ENCODE measurements at regions of chr2 and their contacts with region 1.

Region 1: GRCh38 chr2:170409164-170409535 is 231.2 kb downstream of the MYO3B start:
- H3K4me3 ChIP-seq: peak overlapping the region; percentile 11; the same call in 1 of the 2 replicates
- H3K27ac ChIP-seq: no peak overlapping the region
- H3K4me1 ChIP-seq: no peaks in the 10 kb centered on the region
- CTCF ChIP-seq: peak; percentile 57

Region 2: DNA sequence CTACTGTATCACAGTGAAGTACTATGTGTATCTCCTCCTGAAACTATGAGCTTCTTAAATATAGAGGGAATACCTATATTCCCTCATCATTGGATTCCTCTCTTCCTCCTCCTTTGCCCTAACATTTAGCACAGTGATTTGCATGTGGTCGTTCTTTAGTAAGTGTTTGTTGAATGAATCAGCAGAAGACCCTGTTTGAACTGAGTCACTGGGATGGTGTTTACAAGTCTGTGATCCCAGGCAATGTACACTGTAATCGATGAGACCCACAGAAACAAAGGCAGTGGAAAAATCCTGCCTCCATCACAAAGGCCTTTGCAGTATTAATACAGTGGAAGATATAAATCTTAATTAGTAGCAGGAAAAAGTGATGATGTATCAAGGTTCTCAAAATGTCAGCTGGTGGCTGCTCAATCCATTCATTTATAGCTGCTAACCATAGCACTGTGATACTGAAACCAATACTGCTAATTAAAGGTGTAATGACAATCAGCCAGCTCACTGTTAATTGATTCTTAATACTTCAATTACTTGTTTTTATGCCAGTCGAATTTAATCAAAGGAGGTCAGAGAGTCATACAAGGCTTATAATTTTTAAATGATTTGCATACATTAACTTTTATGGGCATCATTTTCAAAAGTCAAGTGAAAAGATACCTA is 252.0 kb before region 1 on chr2:
- CTCF ChIA-PET with region 1: no interaction called
- POLR2A ChIA-PET with region 1: no interaction called
- H3K4me3 ChIP-seq: no peak overlapping the region
- H3K27ac ChIP-seq: no peak overlapping the region
- H3K4me1 ChIP-seq: no peaks in the 10 kb centered on the region
- CTCF ChIP-seq: no peak

Region 3: DNA sequence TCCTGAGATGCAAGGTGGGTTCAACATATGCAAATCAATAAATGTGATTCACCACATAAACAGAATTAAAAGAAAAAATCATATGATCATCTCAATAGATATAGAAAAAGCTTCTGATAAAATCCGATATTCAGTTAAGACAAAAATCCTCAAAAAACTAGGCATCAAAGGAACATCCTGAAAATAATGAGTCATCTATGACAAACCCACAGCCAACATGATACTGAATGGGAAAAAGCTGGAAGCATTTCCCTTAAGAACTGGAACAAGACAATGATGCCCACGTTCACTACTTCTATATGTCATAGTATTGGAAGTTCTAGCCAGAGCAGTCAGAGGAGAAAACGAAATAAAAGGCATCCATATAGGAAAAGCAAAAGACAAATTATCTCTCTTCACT is 150.8 kb before region 1 on chr2:
- CTCF ChIA-PET with region 1: no interaction called
- POLR2A ChIA-PET with region 1: no interaction called
- H3K4me3 ChIP-seq: no peak overlapping the region
- H3K27ac ChIP-seq: no peak overlapping the region
- H3K4me1 ChIP-seq: no peaks in the 10 kb centered on the region
- CTCF ChIP-seq: no peak

Region 4: DNA sequence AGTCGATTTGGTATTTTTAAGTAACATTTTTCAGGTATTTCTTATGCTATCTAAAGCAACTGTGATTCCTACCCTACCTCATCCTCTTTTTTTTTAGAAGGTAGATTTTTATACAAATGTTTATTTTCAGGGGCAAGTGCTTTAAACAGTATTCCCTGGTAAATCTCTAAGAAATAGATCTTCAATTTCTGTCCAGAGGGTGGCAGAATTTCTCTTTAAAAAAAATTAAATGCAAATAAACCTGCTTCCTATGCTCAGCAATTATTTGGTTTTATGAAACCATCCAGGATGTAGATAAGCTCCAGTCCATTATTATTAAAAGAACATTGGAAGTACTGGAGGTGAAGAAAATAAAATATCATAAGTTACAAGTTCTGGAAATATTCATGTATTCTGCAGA is 39.3 kb before region 1 on chr2:
- CTCF ChIA-PET with region 1: interaction called, 16 read pairs
- POLR2A ChIA-PET with region 1: no interaction called
- H3K4me3 ChIP-seq: no peak overlapping the region
- H3K27ac ChIP-seq: no peak overlapping the region
- H3K4me1 ChIP-seq: no peaks in the 10 kb centered on the region
- CTCF ChIP-seq: 0 out of 2 replicates have a peak, but pooled peaks have one; percentile 7

Region 5: GRCh38 chr2:170425281-170425751 is 16.2 kb after region 1 on chr2:
- CTCF ChIA-PET with region 1: interaction called, 37 read pairs
- POLR2A ChIA-PET with region 1: no interaction called
- H3K4me3 ChIP-seq: no peak overlapping the region
- H3K27ac ChIP-seq: no peak overlapping the region
- H3K4me1 ChIP-seq: no peaks in the 10 kb centered on the region
- CTCF ChIP-seq: no peak

Region 6: DNA sequence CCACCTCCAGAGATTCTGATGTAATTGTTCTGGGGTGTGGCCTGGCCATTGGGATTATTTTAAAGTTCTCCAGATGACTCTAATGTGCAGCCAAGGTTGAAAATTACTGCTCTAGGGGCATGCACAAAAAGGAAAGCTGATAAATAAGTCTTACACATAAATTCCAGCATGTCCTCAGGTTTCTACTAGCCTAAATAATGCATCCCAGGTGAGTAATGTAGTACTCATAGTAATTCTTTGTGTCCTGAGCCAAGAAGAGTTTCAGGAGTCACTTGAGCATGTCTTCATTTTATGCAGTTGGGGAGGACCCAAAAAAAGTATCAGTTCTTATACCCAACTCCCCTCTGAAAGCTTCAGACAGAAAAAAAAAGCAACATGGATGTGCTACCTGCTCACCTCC is 175.9 kb after region 1 on chr2:
- CTCF ChIA-PET with region 1: interaction called, 12 read pairs
- POLR2A ChIA-PET with region 1: no interaction called
- H3K4me3 ChIP-seq: no peak overlapping the region
- H3K27ac ChIP-seq: no peak overlapping the region
- H3K4me1 ChIP-seq: peaks cover 3% of the 10 kb centered on the region; the same call in 1 of the 2 replicates
- CTCF ChIP-seq: no peak

Region 7: GRCh38 chr2:170806548-170806947 is 397.4 kb after region 1 on chr2:
- CTCF ChIA-PET with region 1: interaction called, 31 read pairs
- POLR2A ChIA-PET with region 1: no interaction called
- H3K4me3 ChIP-seq: no peak overlapping the region
- H3K27ac ChIP-seq: no peak overlapping the region
- H3K4me1 ChIP-seq: no peaks in the 10 kb centered on the region
- CTCF ChIP-seq: no peak

Region 8: DNA sequence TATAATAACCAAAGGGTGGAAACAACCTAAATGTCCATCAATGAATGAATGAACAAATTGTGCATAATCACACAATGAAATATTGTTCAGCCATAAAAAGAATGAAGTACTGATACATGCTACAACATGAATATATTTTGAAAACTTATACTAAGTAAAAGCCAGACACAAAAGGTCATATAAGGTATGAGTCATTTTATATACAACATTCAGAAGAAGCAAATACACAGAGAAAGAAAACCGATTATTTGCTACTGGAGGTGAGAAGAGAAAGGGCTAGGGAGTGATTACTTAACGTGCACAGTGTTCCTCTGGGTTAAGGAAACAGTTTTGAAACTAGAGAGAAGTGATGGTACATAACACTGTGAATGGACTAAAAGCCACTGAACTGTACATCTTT is 625.2 kb after region 1 on chr2:
- CTCF ChIA-PET with region 1: no interaction called
- POLR2A ChIA-PET with region 1: no interaction called
- H3K4me3 ChIP-seq: no peak overlapping the region
- H3K27ac ChIP-seq: no peak overlapping the region
- H3K4me1 ChIP-seq: no peaks in the 10 kb centered on the region
- CTCF ChIP-seq: no peak

Measured in HEK293 (cell line).